B cell (primary cell): ENCODE measurements at regions of chr7 and their contacts with region 1.

Region 1: GRCh38 chr7:29189743-29190201 is 4.8 kb upstream of the CHN2 start:
- DNase-seq: peak; percentile 54
- ATAC-seq: no peak
- H3K4me3 ChIP-seq: no peak overlapping the region
- H3K4me3 Mint-ChIP-seq: no peak overlapping the region
- H3K27ac ChIP-seq: no peak overlapping the region
- H3K27ac Mint-ChIP-seq: no peak overlapping the region
- H3K4me1 ChIP-seq: peaks cover 5 to 7% of the 10 kb centered on the region in 2 donors
- H3K4me1 Mint-ChIP-seq: no peaks in the 10 kb centered on the region
- H3K27me3 ChIP-seq: peaks cover 0 to 14% (median 5%) of the 10 kb centered on the region in 4 experiments
- H3K27me3 Mint-ChIP-seq: peaks cover 35% of the 10 kb centered on the region
- CTCF ChIP-seq: peak; percentile 75

Region 2: DNA sequence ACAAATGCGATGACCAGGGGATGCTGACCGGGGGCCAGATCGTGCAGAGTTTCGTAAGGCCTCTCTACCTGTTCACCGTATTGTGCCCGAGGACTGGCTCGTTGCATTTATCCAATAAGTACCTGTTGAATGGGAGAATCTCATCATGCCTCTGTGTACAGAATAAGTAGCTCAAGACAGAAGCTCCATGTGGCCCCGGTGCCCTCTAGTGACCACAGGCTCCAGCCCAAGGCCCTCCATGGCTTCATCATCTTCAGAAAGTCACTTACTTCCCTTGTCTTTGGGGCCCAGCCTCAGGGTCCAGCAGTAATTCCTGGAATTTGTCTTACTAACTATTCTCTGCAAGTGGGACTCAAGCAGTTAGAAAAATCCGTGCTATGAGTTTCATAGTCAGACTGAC is 155.8 kb after region 1 on chr7:
- CTCF ChIA-PET with region 1: interaction called, 11 read pairs
- POLR2A ChIA-PET with region 1: no interaction called
- intact Hi-C with region 1: loop called (anchors 2 kb)
- DNase-seq: no peak
- ATAC-seq: no peak
- H3K4me3 ChIP-seq: no peak overlapping the region
- H3K4me3 Mint-ChIP-seq: no peak overlapping the region
- H3K27ac ChIP-seq: no peak overlapping the region
- H3K27ac Mint-ChIP-seq: no peak overlapping the region
- H3K4me1 ChIP-seq: peaks cover 4 to 11% of the 10 kb centered on the region in 2 donors
- H3K4me1 Mint-ChIP-seq: no peaks in the 10 kb centered on the region
- H3K27me3 ChIP-seq: no peaks in the 10 kb centered on the region
- H3K27me3 Mint-ChIP-seq: peaks cover 4% of the 10 kb centered on the region
- CTCF ChIP-seq: no peak